HepG2 (cell line): ENCODE measurements at regions of chrX and their contacts with region 1.

Region 1: GRCh38 chrX:66728818-66729271 is 90.0 kb upstream of the EDA2R start:
- DNase-seq: peak; percentile 6
- ATAC-seq: peak; percentile 51; the same call in 2 of the 3 replicates
- H3K4me3 ChIP-seq: no peak overlapping the region
- H3K27ac ChIP-seq: no peak overlapping the region
- H3K4me1 ChIP-seq: no peaks in the 10 kb centered on the region
- H3K27me3 ChIP-seq: no peaks in the 10 kb centered on the region
- CTCF ChIP-seq: peak; percentile 60
- EP300 ChIP-seq: no peak
- POLR2A ChIP-seq: no peak
- RAD21 ChIP-seq: no peak

Region 2: DNA sequence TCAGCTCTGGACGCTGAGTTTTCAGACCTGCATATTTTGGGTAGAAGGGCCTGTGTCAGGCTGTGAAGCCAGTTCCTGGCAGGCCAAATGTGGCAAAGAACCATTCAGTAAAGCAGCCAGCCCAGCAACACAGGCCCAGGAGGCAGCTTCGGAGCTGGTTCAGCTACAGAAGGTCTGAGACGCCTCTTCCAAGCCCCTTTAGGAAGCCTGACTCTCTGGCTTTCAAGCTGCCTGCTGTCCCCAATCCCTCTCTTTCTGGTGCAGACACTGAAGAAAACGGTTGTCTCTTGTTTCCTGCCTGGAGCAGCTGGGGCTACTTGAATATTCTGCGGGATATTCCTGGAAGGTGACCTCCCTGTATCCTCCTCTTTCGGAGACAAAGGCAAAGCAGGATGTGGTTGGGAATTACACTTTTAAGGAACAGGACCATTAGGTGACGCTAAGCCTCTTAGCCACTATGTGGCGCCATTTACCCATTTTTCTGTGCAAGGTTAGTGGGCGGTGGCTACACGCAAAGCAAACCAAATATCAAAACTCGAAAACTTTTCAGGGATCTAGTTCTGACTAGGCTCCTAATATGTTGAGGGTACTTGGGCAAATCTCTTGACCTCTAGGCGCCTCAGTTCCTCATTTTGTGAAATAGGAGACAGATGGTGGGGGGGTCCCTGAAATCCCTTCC is 1147.0 kb before region 1 on chrX:
- CTCF ChIA-PET with region 1: interaction called, 8 read pairs
- POLR2A ChIA-PET with region 1: no interaction called
- in situ Hi-C with region 1: loop called (anchors 25 kb)
- intact Hi-C with region 1: loop called (anchors 2 kb)
- DNase-seq: peak; percentile 26
- ATAC-seq: peak; percentile 90
- H3K4me3 ChIP-seq: no peak overlapping the region
- H3K27ac ChIP-seq: no peak overlapping the region
- H3K4me1 ChIP-seq: no peaks in the 10 kb centered on the region
- H3K27me3 ChIP-seq: no peaks in the 10 kb centered on the region
- CTCF ChIP-seq: peak; percentile 76
- EP300 ChIP-seq: no peak
- POLR2A ChIP-seq: no peak
- RAD21 ChIP-seq: peak; percentile 26; the same call in 1 of the 2 replicates

Region 3: GRCh38 chrX:65595460-65595876 is 1133.4 kb before region 1 on chrX:
- CTCF ChIA-PET with region 1: interaction called, 3 read pairs
- POLR2A ChIA-PET with region 1: no interaction called
- in situ Hi-C with region 1: loop called (anchors 25 kb)
- intact Hi-C with region 1: no loop called
- DNase-seq: peak; percentile 66
- ATAC-seq: peak; percentile 91
- H3K4me3 ChIP-seq: no peak overlapping the region
- H3K27ac ChIP-seq: no peak overlapping the region
- H3K4me1 ChIP-seq: no peaks in the 10 kb centered on the region
- H3K27me3 ChIP-seq: no peaks in the 10 kb centered on the region
- CTCF ChIP-seq: peak; percentile 84
- EP300 ChIP-seq: no peak
- POLR2A ChIP-seq: no peak
- RAD21 ChIP-seq: 0 out of 2 replicates have a peak, but pooled peaks have one; percentile 33

Region 4: GRCh38 chrX:66200855-66201795 is 527.7 kb before region 1 on chrX:
- CTCF ChIA-PET with region 1: no interaction called
- POLR2A ChIA-PET with region 1: no interaction called
- in situ Hi-C with region 1: no loop called
- intact Hi-C with region 1: loop called (anchors 2 kb)
- DNase-seq: no peak
- ATAC-seq: no peak
- H3K4me3 ChIP-seq: no peak overlapping the region
- H3K27ac ChIP-seq: no peak overlapping the region
- H3K4me1 ChIP-seq: no peaks in the 10 kb centered on the region
- H3K27me3 ChIP-seq: no peaks in the 10 kb centered on the region
- CTCF ChIP-seq: no peak
- EP300 ChIP-seq: no peak
- POLR2A ChIP-seq: no peak
- RAD21 ChIP-seq: no peak

Region 5: GRCh38 chrX:66489339-66489738 is 239.5 kb before region 1 on chrX:
- CTCF ChIA-PET with region 1: no interaction called
- POLR2A ChIA-PET with region 1: no interaction called
- in situ Hi-C with region 1: no loop called
- intact Hi-C with region 1: no loop called
- DNase-seq: peak; percentile 0
- ATAC-seq: no peak
- H3K4me3 ChIP-seq: no peak overlapping the region
- H3K27ac ChIP-seq: no peak overlapping the region
- H3K4me1 ChIP-seq: no peaks in the 10 kb centered on the region
- H3K27me3 ChIP-seq: no peaks in the 10 kb centered on the region
- CTCF ChIP-seq: no peak
- EP300 ChIP-seq: no peak
- POLR2A ChIP-seq: no peak
- RAD21 ChIP-seq: no peak

Region 6: DNA sequence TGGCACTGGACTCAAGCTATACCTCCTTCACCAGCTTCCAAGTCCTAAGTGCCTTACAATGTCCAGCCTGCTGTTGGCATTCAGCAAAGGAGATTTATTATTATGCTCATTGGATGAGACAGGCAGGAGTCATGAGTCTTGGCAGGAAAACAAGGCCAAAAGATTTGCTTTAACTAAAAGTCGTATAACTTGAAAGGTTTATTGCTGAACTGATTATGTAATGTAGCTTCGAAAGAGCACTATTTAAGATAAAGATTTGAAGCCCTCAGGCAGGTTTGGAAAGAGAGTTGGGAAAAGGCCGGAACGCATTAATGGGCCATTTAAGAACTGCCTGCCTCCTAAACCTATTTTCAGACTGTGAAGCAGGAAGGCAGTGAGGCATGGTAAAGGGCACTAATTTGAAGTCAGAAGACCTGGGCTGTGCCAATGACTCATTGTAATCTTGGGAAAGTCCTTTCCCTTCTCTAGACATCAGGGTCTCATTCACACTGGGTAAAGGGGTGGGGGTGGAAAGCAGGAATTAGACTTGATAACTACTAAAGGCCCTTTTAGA is 190.5 kb after region 1 on chrX:
- CTCF ChIA-PET with region 1: no interaction called
- POLR2A ChIA-PET with region 1: no interaction called
- in situ Hi-C with region 1: no loop called
- intact Hi-C with region 1: no loop called
- DNase-seq: no peak
- ATAC-seq: no peak
- H3K4me3 ChIP-seq: no peak overlapping the region
- H3K27ac ChIP-seq: no peak overlapping the region
- H3K4me1 ChIP-seq: no peaks in the 10 kb centered on the region
- H3K27me3 ChIP-seq: no peaks in the 10 kb centered on the region
- CTCF ChIP-seq: no peak
- EP300 ChIP-seq: no peak
- POLR2A ChIP-seq: no peak
- RAD21 ChIP-seq: no peak

Region 7: GRCh38 chrX:68498508-68499379 is 1769.9 kb after region 1 on chrX and contains the start of gene YIPF6:
- CTCF ChIA-PET with region 1: no interaction called
- POLR2A ChIA-PET with region 1: no interaction called
- in situ Hi-C with region 1: no loop called
- intact Hi-C with region 1: no loop called
- DNase-seq: peak; percentile 55
- ATAC-seq: peak; percentile 97
- H3K4me3 ChIP-seq: peak within 1 kb of the TSS; percentile 85 to 94 (median 87)
- H3K27ac ChIP-seq: peak within 1 kb of the TSS; percentile 95
- H3K4me1 ChIP-seq: peaks cover 40% of the 10 kb centered on the region
- H3K27me3 ChIP-seq: no peaks in the 10 kb centered on the region; a peak in 1 of 5 replicates
- CTCF ChIP-seq: no peak
- EP300 ChIP-seq: no peak
- POLR2A ChIP-seq: peak; percentile 93 to 94
- RAD21 ChIP-seq: no peak
- total RNA-seq, gene YIPF6: 36.7 and 43.6 TPM in 2 replicates